ENCODE measurements at regions of chr12 and their contacts with region 1.

Region 1: GRCh38 chr12:85029456-85029855 is 6.6 kb downstream of the TSPAN19 start:
- DNase-seq: no peak
- ATAC-seq: peak in 3 of 4 donors; percentile 35 to 58 (median 52)
- H3K4me3 ChIP-seq: no peak overlapping the region
- H3K27ac ChIP-seq: no peak overlapping the region
- H3K4me1 ChIP-seq: no peaks in the 10 kb centered on the region
- H3K27me3 ChIP-seq: no peaks in the 10 kb centered on the region
- CTCF ChIP-seq: peak; percentile 56 to 60 (median 57)
- POLR2A ChIP-seq: no peak

Region 2: DNA sequence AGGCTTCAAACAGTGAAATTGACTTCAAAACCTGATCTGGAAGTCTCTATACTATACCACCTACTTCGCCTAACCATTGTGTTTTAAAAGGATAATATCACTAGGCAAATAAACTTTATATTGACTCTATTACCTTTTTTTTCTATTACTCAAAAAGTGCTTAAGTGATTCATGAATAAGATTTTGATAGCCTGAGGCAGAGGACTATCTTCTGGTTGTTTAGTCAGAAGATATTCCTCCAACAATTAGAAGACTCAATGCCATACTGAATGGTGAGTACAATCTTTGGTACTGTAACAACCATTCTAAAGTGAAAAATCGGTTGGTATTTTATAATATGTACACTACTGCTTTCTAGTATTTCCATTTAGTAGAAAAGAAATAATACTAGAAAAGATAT is 139.6 kb before region 1 on chr12:
- intact Hi-C with region 1: loop called (anchors 10 kb)
- DNase-seq: no peak
- ATAC-seq: no peak
- H3K4me3 ChIP-seq: no peak overlapping the region
- H3K27ac ChIP-seq: no peak overlapping the region
- H3K4me1 ChIP-seq: no peaks in the 10 kb centered on the region
- H3K27me3 ChIP-seq: peaks cover 0 to 3% of the 10 kb centered on the region in 2 donors
- CTCF ChIP-seq: no peak
- POLR2A ChIP-seq: no peak

Region 3: GRCh38 chr12:85253823-85254222 is 224.4 kb after region 1 on chr12:
- intact Hi-C with region 1: no loop called
- DNase-seq: no peak
- ATAC-seq: no peak
- H3K4me3 ChIP-seq: no peak overlapping the region
- H3K27ac ChIP-seq: no peak overlapping the region
- H3K4me1 ChIP-seq: no peaks in the 10 kb centered on the region
- H3K27me3 ChIP-seq: no peaks in the 10 kb centered on the region
- CTCF ChIP-seq: no peak
- POLR2A ChIP-seq: no peak

Measured in right lobe of liver (tissue), 6 donors.